PC-9 (cell line): ENCODE measurements at regions of chr2 and their contacts with region 1.

Region 1: DNA sequence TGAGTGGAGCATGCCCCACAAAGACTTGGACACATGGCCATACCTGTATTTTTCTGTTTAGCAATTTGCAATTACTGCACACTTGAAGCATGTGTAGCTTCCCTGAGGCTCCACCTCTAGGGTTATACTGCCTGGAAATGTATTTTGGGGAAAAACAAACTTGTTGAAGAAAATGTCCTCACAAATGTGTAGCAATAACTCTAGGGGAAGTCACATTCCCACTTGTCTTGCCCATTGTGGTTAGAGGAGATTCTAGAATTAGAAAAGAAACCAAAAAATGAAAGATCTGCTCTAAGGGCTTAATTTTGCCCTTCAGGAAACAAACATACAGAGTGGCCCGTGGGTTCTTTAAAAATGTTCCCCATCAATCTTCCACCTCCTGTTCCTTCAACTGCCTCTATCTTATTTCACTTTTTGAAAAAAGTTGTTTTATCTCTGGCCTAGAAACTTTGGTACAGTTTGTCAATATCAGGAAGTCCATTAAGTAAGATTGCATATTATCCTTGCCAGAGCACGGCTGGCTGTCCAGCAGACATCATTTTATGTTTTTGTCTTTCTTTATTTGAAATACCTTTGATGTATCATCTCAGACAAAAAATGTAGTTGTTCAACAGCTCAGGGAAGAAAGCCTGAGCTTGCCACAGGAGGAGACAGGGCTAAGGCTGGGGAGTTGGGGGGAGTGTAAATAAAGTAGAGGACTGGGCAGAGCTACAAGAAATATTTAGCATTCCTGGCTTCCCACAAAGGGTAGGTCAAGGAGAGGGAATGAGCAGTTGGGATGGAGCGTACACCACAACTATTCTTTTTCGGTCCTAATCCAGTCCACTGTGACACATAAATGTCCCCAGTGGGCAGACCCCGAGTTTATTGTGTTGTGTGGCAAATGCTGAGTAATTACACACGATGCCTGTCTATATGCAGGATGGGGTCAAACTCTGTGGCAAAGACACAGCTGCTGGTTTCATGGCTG is 96.8 kb upstream of the CDC42EP3 start:
- DNase-seq: peak; percentile 75 to 95
- H3K4me3 ChIP-seq: peak overlapping the region; percentile 9; the same call in 1 of the 2 replicates
- H3K27ac ChIP-seq: peak overlapping the region; percentile 66
- H3K4me1 ChIP-seq: peaks cover 42% of the 10 kb centered on the region
- H3K27me3 ChIP-seq: no peaks in the 10 kb centered on the region
- CTCF ChIP-seq: no peak

Region 2: DNA sequence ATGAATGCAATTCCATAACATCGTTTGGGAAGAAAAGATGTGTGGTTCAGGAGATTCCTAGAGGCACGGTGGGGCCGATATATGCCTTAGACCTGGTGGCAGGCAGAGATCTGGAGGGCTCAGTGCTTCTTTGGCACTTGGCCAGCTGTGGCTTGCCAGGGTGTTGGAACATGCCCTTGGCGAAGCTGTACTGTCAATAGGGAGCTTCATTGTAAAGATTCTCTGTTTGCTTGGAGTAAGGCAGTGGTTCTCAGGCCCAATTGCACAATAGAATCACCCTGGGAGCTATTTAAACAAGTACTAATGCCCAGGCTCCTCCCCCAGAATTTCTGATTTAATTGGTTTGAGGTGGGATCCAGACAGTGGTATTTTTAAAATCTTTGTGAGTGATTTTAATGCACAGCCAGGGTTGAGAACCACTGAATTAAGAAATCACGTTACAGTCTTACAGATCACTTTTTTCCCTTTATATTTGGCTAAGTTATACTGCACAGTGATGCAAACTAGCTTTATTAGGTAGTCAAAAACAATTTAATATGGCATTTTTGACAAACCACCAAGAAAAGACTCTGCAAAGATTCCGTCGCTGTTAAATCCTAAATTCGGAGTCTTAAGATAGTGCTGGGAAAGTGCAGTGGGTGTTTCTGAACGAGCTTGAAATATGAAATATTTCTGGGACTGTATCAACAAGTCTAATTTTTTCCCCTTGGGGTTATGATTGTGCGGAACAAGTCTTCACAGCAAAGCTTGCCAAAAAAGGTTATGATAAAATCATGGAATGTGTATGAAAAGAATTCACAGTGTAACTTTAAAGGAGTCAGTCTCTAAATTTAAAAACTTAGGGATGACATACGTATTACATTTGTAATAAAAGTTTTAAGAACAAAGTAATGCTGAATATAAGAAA is 1334.7 kb before region 1 on chr2:
- CTCF ChIA-PET with region 1: no interaction called
- POLR2A ChIA-PET with region 1: no interaction called
- intact Hi-C with region 1: no loop called
- DNase-seq: no peak
- H3K4me3 ChIP-seq: no peak overlapping the region
- H3K27ac ChIP-seq: no peak overlapping the region
- H3K4me1 ChIP-seq: peaks cover 6% of the 10 kb centered on the region
- H3K27me3 ChIP-seq: no peaks in the 10 kb centered on the region
- CTCF ChIP-seq: no peak

Region 3: GRCh38 chr2:37688771-37689468 is 79.3 kb before region 1 on chr2:
- CTCF ChIA-PET with region 1: no interaction called
- POLR2A ChIA-PET with region 1: no interaction called
- intact Hi-C with region 1: loop called (anchors 1 kb)
- DNase-seq: peak; percentile 76 to 97
- H3K4me3 ChIP-seq: peak overlapping the region; percentile 19; the same call in 1 of the 2 replicates
- H3K27ac ChIP-seq: peak overlapping the region; percentile 85
- H3K4me1 ChIP-seq: peaks cover 30% of the 10 kb centered on the region
- H3K27me3 ChIP-seq: no peaks in the 10 kb centered on the region
- CTCF ChIP-seq: no peak

Region 4: GRCh38 chr2:37711308-37711731 is 56.9 kb before region 1 on chr2:
- CTCF ChIA-PET with region 1: no interaction called
- POLR2A ChIA-PET with region 1: interaction called, 4 read pairs
- intact Hi-C with region 1: loop called (anchors 1 kb)
- DNase-seq: peak; percentile 80 to 95
- H3K4me3 ChIP-seq: no peak overlapping the region
- H3K27ac ChIP-seq: peak overlapping the region; percentile 66
- H3K4me1 ChIP-seq: peaks cover 42% of the 10 kb centered on the region
- H3K27me3 ChIP-seq: no peaks in the 10 kb centered on the region
- CTCF ChIP-seq: no peak

Region 5: GRCh38 chr2:37786854-37787253 is 18.6 kb after region 1 on chr2:
- CTCF ChIA-PET with region 1: no interaction called
- POLR2A ChIA-PET with region 1: no interaction called
- intact Hi-C with region 1: no loop called
- DNase-seq: no peak
- H3K4me3 ChIP-seq: no peak overlapping the region
- H3K27ac ChIP-seq: no peak overlapping the region
- H3K4me1 ChIP-seq: no peaks in the 10 kb centered on the region
- H3K27me3 ChIP-seq: no peaks in the 10 kb centered on the region
- CTCF ChIP-seq: no peak

Region 6: GRCh38 chr2:37890893-37891495 is 122.8 kb after region 1 on chr2:
- CTCF ChIA-PET with region 1: no interaction called
- POLR2A ChIA-PET with region 1: no interaction called
- intact Hi-C with region 1: no loop called
- DNase-seq: peak; percentile 62 to 65
- H3K4me3 ChIP-seq: no peak overlapping the region
- H3K27ac ChIP-seq: no peak overlapping the region
- H3K4me1 ChIP-seq: no peaks in the 10 kb centered on the region
- H3K27me3 ChIP-seq: no peaks in the 10 kb centered on the region
- CTCF ChIP-seq: peak; percentile 90

Region 7: GRCh38 chr2:37925063-37925897 is 157.0 kb after region 1 on chr2 and contains the start of gene RMDN2:
- CTCF ChIA-PET with region 1: no interaction called
- POLR2A ChIA-PET with region 1: no interaction called
- intact Hi-C with region 1: no loop called
- DNase-seq: peak; percentile 89 to 95
- H3K4me3 ChIP-seq: peak within 1 kb of the TSS; percentile 94
- H3K27ac ChIP-seq: peak within 1 kb of the TSS; percentile 77
- H3K4me1 ChIP-seq: peaks cover 15% of the 10 kb centered on the region
- H3K27me3 ChIP-seq: no peaks in the 10 kb centered on the region
- CTCF ChIP-seq: no peak
- total RNA-seq, gene RMDN2: 4.0 and 5.3 TPM in 2 replicates